ENCODE measurements at regions of chr17 and their contacts with region 1.

Region 1: GRCh38 chr17:17356149-17356930 is 53.2 kb downstream of the NT5M start:
- DNase-seq: peak; percentile 37
- H3K4me3 ChIP-seq: no peak overlapping the region
- CTCF ChIP-seq: peak; percentile 98

Region 2: DNA sequence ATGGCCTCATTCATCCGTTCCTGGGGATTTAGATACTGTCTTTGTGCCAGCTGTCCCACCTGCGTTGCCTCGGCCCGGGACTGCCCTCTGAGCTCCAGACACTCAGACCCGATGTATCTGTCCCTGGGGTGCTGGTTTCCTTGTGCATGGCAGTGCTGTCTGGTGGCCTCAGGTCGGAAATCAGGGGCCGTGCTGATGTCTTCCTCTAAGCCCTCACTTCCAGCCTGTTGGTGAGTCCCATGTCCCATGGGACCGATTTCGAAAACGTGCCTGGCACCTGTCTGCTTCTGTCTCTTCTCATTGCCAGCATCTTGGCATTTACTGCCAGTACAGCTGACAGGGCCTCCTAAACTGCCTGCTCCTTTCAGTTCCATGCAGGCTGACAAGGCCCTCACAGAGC is 31.1 kb before region 1 on chr17:
- CTCF ChIA-PET with region 1: interaction called, 13 read pairs
- POLR2A ChIA-PET with region 1: no interaction called
- DNase-seq: no peak
- H3K4me3 ChIP-seq: no peak overlapping the region
- CTCF ChIP-seq: no peak

Region 3: DNA sequence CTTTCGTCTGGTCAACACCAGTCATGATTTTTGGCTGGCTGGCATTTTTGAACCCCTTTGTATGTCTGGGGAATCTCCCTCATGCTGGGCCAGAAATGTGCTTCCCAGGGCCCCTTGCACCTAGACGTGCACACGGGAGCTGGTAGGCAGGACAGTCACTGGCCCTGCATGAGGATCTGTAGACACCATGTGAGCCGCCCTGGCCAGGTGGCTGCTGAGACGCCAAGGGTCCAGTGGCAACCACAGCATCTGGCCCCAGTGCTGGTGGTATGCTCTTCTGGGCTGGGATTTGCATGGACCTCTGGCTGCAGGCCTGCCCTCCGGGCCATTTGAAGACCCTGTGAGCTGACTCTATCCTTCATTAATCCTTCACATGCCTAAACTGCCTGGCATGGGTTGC is 14.4 kb after region 1 on chr17:
- CTCF ChIA-PET with region 1: interaction called, 52 read pairs
- POLR2A ChIA-PET with region 1: no interaction called
- DNase-seq: no peak
- H3K4me3 ChIP-seq: no peak overlapping the region
- CTCF ChIP-seq: no peak

Region 4: DNA sequence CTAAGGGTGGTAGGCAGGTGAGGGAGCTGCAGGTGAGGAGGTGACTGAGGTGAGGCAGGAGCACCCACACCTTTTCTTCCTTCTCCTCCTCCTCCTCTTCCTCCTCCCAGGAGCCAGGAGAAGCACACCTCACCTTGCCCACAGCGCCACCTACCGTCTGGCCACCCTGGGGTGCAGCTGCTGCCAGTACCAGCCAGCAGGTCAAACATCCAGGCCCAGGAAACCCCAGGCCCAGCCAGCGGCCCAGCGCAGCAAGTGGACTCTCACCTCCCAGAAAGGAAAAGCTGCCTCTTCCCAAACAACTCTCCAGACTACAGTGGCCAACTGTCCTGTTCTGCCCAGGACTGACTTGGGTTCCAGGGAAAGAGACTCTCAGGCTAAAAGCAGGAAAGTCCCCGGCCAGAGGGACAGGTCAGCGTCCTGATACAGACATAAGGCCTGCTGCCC is 212.4 kb after region 1 on chr17:
- CTCF ChIA-PET with region 1: interaction called, 125 read pairs
- POLR2A ChIA-PET with region 1: no interaction called
- DNase-seq: no peak
- H3K4me3 ChIP-seq: no peak overlapping the region
- CTCF ChIP-seq: peak; percentile 88

Region 5: GRCh38 chr17:17580662-17581470 is 224.5 kb after region 1 on chr17:
- CTCF ChIA-PET with region 1: interaction called, 14 read pairs
- POLR2A ChIA-PET with region 1: no interaction called
- DNase-seq: no peak
- H3K4me3 ChIP-seq: no peak overlapping the region
- CTCF ChIP-seq: no peak

Region 6: DNA sequence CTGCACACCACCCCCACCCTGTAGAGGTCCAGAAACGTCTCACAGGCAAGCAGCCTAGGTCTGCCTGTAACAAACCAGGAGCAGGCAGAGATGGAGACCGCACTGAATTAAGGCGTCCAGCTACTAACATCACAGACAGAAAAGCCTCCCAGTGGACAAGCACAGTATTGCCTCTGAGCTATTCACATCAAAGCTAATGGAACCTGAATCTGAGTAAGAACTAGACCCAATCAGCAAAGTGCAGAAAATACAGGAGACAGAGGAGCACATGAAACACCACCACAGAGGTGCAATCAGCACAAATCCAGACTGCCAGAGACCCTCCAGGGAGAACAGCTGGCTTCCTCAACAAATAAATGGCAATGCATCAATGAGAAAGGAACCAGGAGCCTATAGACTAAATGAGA is 257.4 kb after region 1 on chr17:
- CTCF ChIA-PET with region 1: interaction called, 90 read pairs
- POLR2A ChIA-PET with region 1: no interaction called
- DNase-seq: no peak
- H3K4me3 ChIP-seq: no peak overlapping the region
- CTCF ChIP-seq: peak; percentile 67

Region 7: GRCh38 chr17:17648762-17649161 is 292.4 kb after region 1 on chr17:
- CTCF ChIA-PET with region 1: interaction called, 365 read pairs
- POLR2A ChIA-PET with region 1: no interaction called
- DNase-seq: no peak
- H3K4me3 ChIP-seq: no peak overlapping the region
- CTCF ChIP-seq: no peak

Measured in AG04449 (cell line).